ENCODE measurements at regions of chr7 and their contacts with region 1.

Region 1: DNA sequence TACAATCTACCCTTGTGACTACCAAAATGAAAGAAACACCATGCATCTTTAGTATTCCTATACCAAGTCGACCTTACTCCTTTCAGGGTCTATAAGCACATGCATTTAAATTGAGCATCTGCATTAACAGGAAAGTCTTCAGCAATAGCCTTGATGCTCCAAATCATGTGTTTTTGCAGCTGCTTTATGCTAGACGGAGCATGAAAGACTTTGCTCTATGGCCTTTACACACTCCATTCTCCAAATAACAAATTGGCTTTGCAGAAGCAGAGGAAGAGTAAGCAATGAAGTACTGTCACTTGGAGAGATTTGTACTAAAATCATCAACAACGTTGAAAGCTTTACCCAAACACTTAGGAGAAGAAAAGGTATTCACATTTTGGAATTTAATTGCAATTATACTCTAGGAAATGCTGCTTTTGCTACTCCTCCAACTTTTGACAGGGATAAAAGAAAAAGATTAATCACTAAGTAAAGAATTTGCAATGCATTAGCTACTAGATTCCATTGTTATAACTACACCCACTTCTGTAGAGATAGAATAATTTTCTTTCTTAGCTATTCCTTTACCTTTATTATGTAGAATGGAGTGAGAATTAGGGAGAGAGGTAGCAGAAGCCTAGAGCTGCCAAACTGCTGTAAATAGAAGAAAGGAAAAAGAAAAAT is 131.8 kb downstream of the SEMA3E start:
- DNase-seq: no peak
- ATAC-seq: no peak
- H3K4me3 ChIP-seq: no peak overlapping the region
- H3K27ac ChIP-seq: no peak overlapping the region
- H3K4me1 ChIP-seq: no peaks in the 10 kb centered on the region
- H3K27me3 ChIP-seq: no peaks in the 10 kb centered on the region
- CTCF ChIP-seq: no peak
- POLR2A ChIP-seq: no peak
- RAD21 ChIP-seq: no peak

Region 2: DNA sequence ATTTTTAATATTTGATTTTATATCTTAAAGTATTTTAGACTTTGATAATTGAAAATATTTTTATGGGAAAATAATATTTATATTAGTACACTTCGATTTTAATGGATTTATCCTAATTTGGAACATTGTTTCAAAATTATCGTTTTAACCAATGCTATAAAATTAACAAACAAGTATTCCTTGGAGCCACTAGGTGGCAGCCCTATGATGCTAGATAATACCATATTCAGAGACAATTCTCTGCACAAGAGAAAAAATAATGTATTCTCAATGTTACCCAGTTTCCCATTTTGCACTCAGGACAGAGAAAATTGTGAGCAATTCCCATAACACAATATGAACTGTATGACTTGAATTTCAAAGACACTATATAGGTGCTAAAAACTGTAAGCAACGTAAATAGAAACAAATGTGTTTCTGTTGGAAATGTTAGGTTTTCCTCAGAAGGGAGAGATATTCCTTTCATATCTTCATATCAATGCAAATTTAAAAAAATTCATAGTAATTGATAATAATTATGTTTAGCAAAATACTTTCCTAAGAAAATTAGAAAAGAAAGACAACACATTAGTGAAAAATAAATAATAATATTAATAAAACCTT is 106.1 kb before region 1 on chr7:
- CTCF ChIA-PET with region 1: no interaction called
- POLR2A ChIA-PET with region 1: no interaction called
- RAD21 ChIA-PET with region 1: no interaction called
- intact Hi-C with region 1: loop called (anchors 2 kb)
- DNase-seq: peak; percentile 36
- ATAC-seq: peak; percentile 52
- H3K4me3 ChIP-seq: no peak overlapping the region
- H3K27ac ChIP-seq: no peak overlapping the region
- H3K4me1 ChIP-seq: no peaks in the 10 kb centered on the region
- H3K27me3 ChIP-seq: no peaks in the 10 kb centered on the region
- CTCF ChIP-seq: peak; percentile 52 to 74 (median 72); a peak in 5 of 6 replicates
- POLR2A ChIP-seq: no peak
- RAD21 ChIP-seq: peak; percentile 76

Measured in HCT116 (cell line).